WTC11 (cell line): ENCODE measurements at regions of chr10 and their contacts with region 1.

Region 1: GRCh38 chr10:101272229-101272868 is 43.1 kb upstream of the LBX1 start:
- DNase-seq: peak; percentile 84
- ATAC-seq: peak; percentile 97
- H3K4me3 Mint-ChIP-seq: no peak overlapping the region
- H3K27ac Mint-ChIP-seq: no peak overlapping the region
- H3K4me1 Mint-ChIP-seq: peaks cover 14% of the 10 kb centered on the region
- H3K27me3 Mint-ChIP-seq: peaks cover 15% of the 10 kb centered on the region
- CTCF ChIP-seq: peak; percentile 68

Region 2: GRCh38 chr10:101258179-101258885 is 14.0 kb before region 1 on chr10:
- CTCF ChIA-PET with region 1: interaction called, 16 read pairs
- POLR2A ChIA-PET with region 1: no interaction called
- DNase-seq: no peak
- ATAC-seq: peak; percentile 64
- H3K4me3 Mint-ChIP-seq: no peak overlapping the region
- H3K27ac Mint-ChIP-seq: no peak overlapping the region
- H3K4me1 Mint-ChIP-seq: peaks cover 41% of the 10 kb centered on the region
- H3K27me3 Mint-ChIP-seq: peaks cover 25% of the 10 kb centered on the region
- CTCF ChIP-seq: no peak

Region 3: GRCh38 chr10:101285519-101286070 is 13.2 kb after region 1 on chr10:
- CTCF ChIA-PET with region 1: interaction called, 101 read pairs
- POLR2A ChIA-PET with region 1: interaction called, 3 read pairs
- DNase-seq: peak; percentile 71
- ATAC-seq: peak; percentile 68
- H3K4me3 Mint-ChIP-seq: peak overlapping the region; percentile 63
- H3K27ac Mint-ChIP-seq: no peak overlapping the region
- H3K4me1 Mint-ChIP-seq: peaks cover 74% of the 10 kb centered on the region
- H3K27me3 Mint-ChIP-seq: peaks cover 89% of the 10 kb centered on the region
- CTCF ChIP-seq: no peak